OCI-LY7 (cell line): ENCODE measurements at regions of chr11 and their contacts with region 1.

Region 1: DNA sequence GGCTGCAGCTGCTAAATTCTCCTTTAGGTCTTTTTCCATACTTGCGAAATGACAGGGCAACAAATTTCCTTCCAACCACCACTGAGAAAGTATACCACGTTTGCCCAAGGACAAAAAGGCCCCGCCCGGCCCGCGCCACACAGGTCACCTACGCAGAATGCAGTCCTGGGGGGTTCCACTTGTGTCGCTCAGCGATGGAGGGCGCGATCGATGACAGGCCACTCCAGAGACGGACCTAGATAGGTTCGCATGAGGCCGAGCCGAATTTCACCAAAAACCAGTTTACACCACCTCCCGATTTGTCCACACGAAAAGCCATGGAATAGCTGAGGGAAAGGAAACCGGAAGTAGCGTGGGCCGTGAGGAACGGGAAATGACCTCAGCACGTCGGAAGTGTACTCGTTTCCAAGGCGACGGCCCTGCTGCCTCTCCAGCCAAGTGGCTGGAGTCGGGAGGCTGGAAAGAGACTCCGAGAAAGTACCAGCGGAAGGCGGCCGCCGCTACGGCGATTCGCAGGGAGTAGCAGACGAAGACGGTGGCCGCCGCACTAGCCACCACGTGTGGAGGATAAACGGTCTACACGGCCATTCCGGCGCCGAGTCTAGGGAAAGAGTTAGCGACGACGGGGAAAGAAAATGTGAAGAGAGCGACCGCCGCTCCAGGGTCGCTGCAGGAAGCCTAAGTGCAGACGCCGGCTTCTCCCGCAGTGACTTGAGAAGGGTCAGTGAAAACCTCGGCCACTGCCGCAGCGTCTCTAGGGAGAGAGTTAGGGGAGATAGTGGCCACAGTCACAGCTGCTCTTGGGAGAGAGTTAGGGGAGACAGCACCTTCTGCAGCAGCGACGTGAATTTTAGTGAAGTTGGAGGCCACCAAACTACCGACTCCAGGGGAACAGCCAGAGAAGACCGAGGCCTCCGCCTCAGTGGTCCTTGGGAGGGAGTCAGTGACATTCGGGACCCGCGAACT is at the start of gene ANKRD42:
- DNase-seq: peak; percentile 92
- H3K4me3 ChIP-seq: peak within 1 kb of the TSS; percentile 80
- H3K27ac ChIP-seq: peak within 1 kb of the TSS; percentile 34
- H3K4me1 ChIP-seq: peaks cover 18% of the 10 kb centered on the region
- CTCF ChIP-seq: peak; percentile 29; the same call in 1 of the 2 replicates
- total RNA-seq, gene ANKRD42: 1.1 and 2.2 TPM in 2 replicates

Region 2: DNA sequence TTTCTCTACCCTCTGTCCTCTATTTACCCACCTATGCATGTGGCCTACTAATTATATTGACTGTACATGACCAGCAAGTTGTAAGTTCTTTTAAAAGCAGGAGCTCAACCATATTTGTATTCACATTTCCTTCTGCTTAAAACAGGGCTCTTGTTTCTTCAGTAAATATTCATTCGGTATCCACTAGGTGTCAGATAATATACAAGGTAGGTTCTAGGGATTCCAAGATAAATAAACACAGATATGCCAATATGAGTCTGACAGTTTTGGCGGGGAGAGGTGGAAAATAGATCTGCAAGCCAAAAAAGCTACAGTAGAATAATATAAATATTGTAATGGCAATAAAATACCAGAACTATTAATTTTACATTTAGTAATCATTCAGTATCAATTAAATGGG is 106.6 kb before region 1 on chr11:
- CTCF ChIA-PET with region 1: no interaction called
- POLR2A ChIA-PET with region 1: no interaction called
- intact Hi-C with region 1: loop called (anchors 5 kb)
- DNase-seq: peak; percentile 44
- H3K4me3 ChIP-seq: no peak overlapping the region
- H3K27ac ChIP-seq: no peak overlapping the region
- H3K4me1 ChIP-seq: no peaks in the 10 kb centered on the region
- CTCF ChIP-seq: peak; percentile 69